Cardiac septum (tissue), 1 donor: ENCODE measurements at regions of chr21 and their contacts with region 1.

Region 1: DNA sequence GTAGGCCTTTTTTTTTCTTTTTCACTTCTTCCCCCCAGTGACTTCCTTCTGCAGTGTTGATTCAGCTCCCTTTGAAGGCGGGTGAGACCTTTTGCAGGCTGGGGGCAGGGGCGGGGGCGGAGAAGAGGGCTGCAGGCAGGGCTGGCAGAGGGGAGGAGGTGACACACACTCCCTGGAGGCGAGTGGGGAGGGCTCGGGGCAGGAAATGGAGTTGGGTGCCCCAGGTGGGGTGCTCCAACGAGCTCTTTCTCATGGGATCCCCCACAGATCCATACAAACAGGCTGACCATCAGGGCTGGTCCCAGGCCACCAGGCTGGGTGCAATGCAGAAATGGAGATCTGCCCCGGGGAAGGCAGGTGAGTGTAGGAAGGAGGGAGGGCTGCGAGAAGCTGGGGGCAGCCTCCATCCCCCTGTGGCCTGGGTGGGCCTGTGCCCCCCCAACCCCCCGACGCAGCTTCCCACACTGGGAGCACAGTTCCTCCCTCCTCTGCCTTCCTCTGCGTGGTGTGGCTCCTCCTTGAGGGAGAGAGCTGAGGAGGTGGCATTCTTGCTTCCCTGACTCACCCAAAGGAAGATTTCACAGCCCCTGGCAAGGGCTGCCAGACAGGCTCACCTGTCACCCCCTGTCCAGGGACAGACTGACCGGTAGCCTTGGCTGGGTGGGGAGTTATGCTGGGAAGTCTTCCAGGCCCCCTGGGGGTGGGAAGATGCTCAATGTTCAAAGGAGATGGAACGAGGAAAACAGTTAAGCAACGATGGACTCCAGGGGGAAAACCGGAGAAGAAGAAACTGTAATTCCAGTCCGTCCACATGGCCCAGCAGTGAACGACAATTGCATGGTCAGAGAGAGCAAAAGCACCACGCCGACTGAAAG is 7.1 kb upstream of the ITGB2 start:
- DNase-seq: peak; percentile 91

Region 2: GRCh38 chr21:44510508-44511210 is 417.2 kb before region 1 on chr21:
- intact Hi-C with region 1: loop called (anchors 10 kb)
- DNase-seq: peak; percentile 89

Region 3: GRCh38 chr21:44892536-44893277 is 35.1 kb before region 1 on chr21:
- intact Hi-C with region 1: loop called (anchors 2 kb)
- DNase-seq: peak; percentile 87

Region 4: DNA sequence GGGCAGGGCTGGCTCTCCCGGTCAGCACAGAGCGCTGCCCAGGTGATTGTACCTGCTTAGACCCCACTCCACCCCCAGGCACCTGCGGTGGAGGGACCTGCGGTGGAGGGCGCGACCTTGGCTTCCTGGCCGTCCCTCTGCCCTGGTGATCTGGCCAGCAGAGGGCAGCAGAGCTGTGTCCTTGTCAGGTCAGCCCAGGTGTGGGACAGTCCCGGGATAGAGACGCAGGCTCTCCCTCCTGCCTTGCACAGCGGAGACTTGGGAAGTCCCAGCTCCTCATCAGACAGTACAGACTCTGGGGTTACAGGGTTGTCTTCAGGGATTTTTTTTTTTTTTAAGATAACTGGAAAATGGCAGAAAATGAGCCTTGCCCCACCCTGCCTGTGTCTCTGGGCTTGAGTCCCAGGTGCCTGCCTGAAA is 22.0 kb after region 1 on chr21:
- intact Hi-C with region 1: no loop called
- DNase-seq: peak; percentile 94